GM10248 (cell line): ENCODE measurements at regions of chr1 and their contacts with region 1.

Region 1: DNA sequence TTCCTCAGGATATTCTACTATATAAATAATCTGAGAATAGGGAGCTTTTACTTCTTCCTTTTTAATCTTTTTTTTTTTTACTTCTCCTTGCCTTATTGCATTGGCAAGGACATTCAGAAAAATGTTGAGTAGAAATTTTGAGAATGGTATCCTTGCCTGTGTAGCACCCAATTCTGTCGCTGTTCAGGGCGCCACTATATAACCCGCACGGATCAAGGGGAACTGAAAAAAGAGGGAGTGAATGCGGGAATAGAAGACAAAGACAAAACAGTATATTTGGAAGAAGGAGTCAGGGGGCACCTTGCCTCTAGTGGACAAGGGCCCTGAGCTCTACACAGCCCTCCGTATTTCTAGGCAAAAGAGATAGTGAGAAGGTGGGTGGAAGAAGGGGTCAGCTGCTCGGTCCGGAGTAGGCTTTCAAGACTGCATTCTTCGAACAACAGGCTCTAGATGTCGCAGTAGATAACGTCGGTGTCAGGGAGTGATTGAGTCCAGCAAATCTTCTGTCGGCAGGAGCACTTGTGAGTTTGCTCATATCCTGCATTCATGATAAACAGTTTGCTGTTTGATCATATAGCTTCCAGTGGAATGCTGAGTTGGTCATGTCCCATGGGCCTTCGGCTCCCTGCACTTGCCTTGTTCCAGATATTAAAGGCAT is 36.9 kb downstream of the DIPK1A start:
- DNase-seq: no peak
- CTCF ChIP-seq: no peak

Region 2: DNA sequence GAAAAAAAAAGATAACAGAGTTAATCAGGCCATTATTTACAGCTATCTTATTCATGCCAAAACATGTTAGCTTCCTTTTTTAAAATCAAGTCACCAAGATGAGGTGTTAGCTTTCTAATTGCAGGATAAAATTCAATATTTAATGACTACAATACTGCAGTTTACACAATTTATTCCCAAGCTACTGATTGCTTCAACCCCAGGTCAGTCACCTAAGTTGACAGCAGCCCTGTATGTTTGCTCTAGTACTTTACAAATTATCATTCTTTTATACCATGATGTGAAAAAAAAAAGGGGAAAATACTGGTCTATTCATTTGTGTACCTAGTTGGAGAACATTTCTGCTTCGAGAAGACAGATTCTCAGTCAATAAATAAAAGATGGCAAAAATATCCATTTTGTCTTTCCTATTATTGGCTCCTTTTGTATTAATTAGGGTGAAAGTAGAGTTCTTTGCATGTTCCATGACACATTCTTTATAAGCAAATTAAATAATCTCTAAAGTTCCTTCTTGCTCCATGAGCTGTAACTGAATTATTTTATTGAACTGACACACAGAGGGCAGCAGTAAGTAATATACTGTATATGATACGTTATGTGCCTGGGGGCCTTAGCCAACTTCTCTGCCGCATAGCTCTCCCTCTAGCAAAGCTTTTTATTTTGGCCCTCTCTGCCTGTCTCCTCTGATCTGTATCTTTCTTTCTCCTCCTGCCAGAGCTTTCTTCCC is 11.1 kb before region 1 on chr1:
- CTCF ChIA-PET with region 1: interaction called, 14 read pairs
- POLR2A ChIA-PET with region 1: no interaction called
- DNase-seq: no peak
- CTCF ChIP-seq: no peak